ENCODE measurements at regions of chr9 and their contacts with region 1.

Region 1: GRCh38 chr9:101486693-101487442 is 46.8 kb upstream of the RNF20 start:
- DNase-seq: peak; percentile 86
- H3K4me3 ChIP-seq: peak overlapping the region; percentile 66 to 73
- H3K27ac ChIP-seq: peak overlapping the region; percentile 19 to 87; a peak in 3 of 4 replicates
- H3K4me1 ChIP-seq: peaks cover 0 to 3% of the 10 kb centered on the region in 2 experiments; a peak in 2 of 4 replicates
- H3K27me3 ChIP-seq: no peaks in the 10 kb centered on the region
- CTCF ChIP-seq: peak; percentile 38
- EP300 ChIP-seq: no peak
- RAD21 ChIP-seq: peak; percentile 67

Region 2: GRCh38 chr9:101465392-101465791 is 21.5 kb before region 1 on chr9:
- CTCF ChIA-PET with region 1: interaction called, 135 read pairs
- POLR2A ChIA-PET with region 1: interaction called, 9 read pairs
- DNase-seq: no peak
- H3K4me3 ChIP-seq: no peak overlapping the region
- H3K27ac ChIP-seq: no peak overlapping the region
- H3K4me1 ChIP-seq: peaks cover 0 to 3% of the 10 kb centered on the region in 2 experiments; a peak in 2 of 4 replicates
- H3K27me3 ChIP-seq: no peaks in the 10 kb centered on the region
- CTCF ChIP-seq: peak; percentile 43
- EP300 ChIP-seq: no peak
- RAD21 ChIP-seq: no peak

Region 3: GRCh38 chr9:101524371-101524770 is 37.5 kb after region 1 on chr9:
- CTCF ChIA-PET with region 1: interaction called, 22 read pairs
- POLR2A ChIA-PET with region 1: no interaction called
- DNase-seq: no peak
- H3K4me3 ChIP-seq: no peak overlapping the region
- H3K27ac ChIP-seq: no peak overlapping the region
- H3K4me1 ChIP-seq: no peaks in the 10 kb centered on the region
- H3K27me3 ChIP-seq: no peaks in the 10 kb centered on the region
- CTCF ChIP-seq: no peak
- EP300 ChIP-seq: no peak
- RAD21 ChIP-seq: no peak

Region 4: GRCh38 chr9:101543098-101543735 is 56.3 kb after region 1 on chr9:
- CTCF ChIA-PET with region 1: no interaction called
- POLR2A ChIA-PET with region 1: no interaction called
- DNase-seq: no peak
- H3K4me3 ChIP-seq: no peak overlapping the region
- H3K27ac ChIP-seq: no peak overlapping the region
- H3K4me1 ChIP-seq: peaks cover 0 to 1% of the 10 kb centered on the region in 2 experiments; a peak in 1 of 4 replicates
- H3K27me3 ChIP-seq: no peaks in the 10 kb centered on the region
- CTCF ChIP-seq: no peak
- EP300 ChIP-seq: no peak
- RAD21 ChIP-seq: no peak